ENCODE measurements at regions of chr3 and their contacts with region 1.

Region 1: DNA sequence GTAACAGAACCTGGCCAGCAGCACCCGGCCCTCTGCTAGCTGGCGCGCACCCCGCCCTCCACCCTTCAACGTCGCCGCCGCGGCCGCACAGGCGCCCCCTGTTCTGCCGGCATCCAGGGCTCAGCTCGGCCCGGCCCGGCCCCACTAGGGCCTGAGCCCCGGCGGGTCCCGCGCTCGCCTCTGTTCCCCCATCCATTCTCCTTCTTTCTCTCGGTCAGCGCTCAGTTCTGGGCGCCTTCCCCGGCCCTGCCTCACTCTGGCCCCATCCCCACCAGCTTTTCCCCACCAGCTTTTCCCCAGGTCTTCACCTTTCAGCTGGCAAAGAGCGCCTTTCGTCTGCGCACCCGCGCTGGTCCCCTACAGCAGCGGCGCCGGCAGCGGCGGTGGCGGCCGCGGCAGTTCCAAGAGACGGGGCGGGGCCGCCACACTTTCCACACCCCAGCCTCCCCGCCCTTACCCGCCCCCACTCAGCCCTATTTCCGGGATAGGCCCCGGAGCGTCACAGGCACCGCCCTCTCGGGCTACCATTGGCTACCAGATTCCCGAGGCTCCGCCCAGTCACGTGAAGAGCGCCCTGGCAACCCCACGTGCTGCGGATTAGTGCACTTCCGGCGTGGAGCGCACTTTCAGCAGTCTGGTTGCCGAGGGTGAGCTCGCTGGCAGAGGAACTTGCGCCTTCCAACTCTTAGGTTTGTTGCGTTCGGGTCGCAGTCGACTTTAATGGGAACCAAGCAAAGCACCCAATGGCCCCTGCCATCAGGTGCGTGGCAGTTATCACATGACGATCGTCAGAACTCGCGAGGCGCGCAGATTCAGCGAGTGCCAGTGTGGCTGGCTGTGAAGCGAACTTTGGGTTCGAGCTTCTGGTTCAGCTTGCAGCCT is at the start of gene EIF5A2:
- DNase-seq: peak; percentile 83 to 94
- H3K4me3 ChIP-seq: peak within 1 kb of the TSS; percentile 63 to 80 (median 70)
- H3K27ac ChIP-seq: no peak within 1 kb of the TSS
- H3K4me1 ChIP-seq: peaks cover 0 to 5% (median 2%) of the 10 kb centered on the region in 4 experiments; a peak in 3 of 7 replicates
- H3K27me3 ChIP-seq: peaks cover 0 to 17% (median 12%) of the 10 kb centered on the region in 4 experiments; a peak in 6 of 7 replicates
- CTCF ChIP-seq: no peak
- EP300 ChIP-seq: peak in 1 of 2 experiments; percentile 7; a peak in 1 of 3 replicates
- POLR2A ChIP-seq: peak in 1 of 2 experiments; percentile 51; a peak in 1 of 3 replicates
- RAD21 ChIP-seq: no peak
- total RNA-seq, gene EIF5A2: 13.8 and 15.0 TPM in 2 replicates

Region 2: GRCh38 chr3:170709046-170709445 is 199.4 kb before region 1 on chr3:
- CTCF ChIA-PET with region 1: no interaction called
- POLR2A ChIA-PET with region 1: no interaction called
- DNase-seq: no peak
- H3K4me3 ChIP-seq: no peak overlapping the region
- H3K27ac ChIP-seq: no peak overlapping the region
- H3K4me1 ChIP-seq: no peaks in the 10 kb centered on the region
- H3K27me3 ChIP-seq: peaks cover 0 to 1% (median 0%) of the 10 kb centered on the region in 4 experiments; a peak in 1 of 7 replicates
- CTCF ChIP-seq: no peak
- EP300 ChIP-seq: no peak
- POLR2A ChIP-seq: no peak
- RAD21 ChIP-seq: no peak

Region 3: DNA sequence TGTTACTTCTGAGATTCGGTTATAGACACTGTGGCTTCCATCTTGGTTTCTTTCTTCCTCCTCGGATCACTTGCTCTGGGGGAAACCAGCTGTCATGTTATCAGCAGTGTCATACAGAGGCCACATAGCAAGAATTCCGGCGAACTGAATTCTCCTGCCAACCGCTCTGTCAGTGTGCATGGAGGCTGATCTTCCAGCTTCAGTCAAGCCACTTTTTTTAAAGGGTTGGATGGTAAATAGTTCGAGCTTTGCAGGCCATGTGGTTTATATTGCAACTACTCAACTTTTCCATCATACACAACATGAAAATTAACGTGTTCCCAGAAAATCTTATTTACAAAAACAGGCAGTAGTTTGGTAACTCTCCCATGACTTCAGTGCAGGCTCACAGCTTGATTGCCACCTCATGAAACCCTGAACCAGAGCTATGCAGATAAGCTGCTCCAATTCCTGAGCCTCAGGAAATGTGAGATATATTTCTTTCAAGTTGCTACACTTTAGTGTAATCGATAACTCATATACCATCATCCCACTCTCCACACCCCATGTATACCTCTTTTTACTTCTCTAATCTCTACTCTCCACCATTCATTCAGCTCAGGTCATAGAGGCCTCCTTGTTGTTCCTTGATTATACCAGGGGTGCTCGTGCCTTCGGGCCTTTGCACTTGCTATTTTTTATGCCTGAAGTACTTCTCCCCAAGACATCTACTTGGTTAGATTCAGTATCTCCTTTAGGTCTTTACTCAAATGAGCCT is 45.7 kb before region 1 on chr3:
- CTCF ChIA-PET with region 1: no interaction called
- POLR2A ChIA-PET with region 1: interaction called, 13 read pairs
- DNase-seq: no peak
- H3K4me3 ChIP-seq: no peak overlapping the region
- H3K27ac ChIP-seq: no peak overlapping the region
- H3K4me1 ChIP-seq: peaks cover 0 to 2% (median 0%) of the 10 kb centered on the region in 4 experiments; a peak in 1 of 7 replicates
- H3K27me3 ChIP-seq: no peaks in the 10 kb centered on the region
- CTCF ChIP-seq: no peak
- EP300 ChIP-seq: no peak
- POLR2A ChIP-seq: no peak
- RAD21 ChIP-seq: no peak